ENCODE measurements at regions of chr3 and their contacts with region 1.

Region 1: GRCh38 chr3:109125902-109126301 is 8.0 kb upstream of the MORC1 start:
- DNase-seq: peak; percentile 36 to 60
- H3K4me3 ChIP-seq: no peak overlapping the region
- H3K4me3 Mint-ChIP-seq: peak overlapping the region; percentile 31
- H3K27ac Mint-ChIP-seq: peak overlapping the region; percentile 70
- H3K4me1 ChIP-seq: peaks cover 33% of the 10 kb centered on the region
- H3K4me1 Mint-ChIP-seq: peaks cover 28% of the 10 kb centered on the region
- H3K27me3 ChIP-seq: no peaks in the 10 kb centered on the region
- H3K27me3 Mint-ChIP-seq: no peaks in the 10 kb centered on the region
- CTCF ChIP-seq: no peak

Region 2: DNA sequence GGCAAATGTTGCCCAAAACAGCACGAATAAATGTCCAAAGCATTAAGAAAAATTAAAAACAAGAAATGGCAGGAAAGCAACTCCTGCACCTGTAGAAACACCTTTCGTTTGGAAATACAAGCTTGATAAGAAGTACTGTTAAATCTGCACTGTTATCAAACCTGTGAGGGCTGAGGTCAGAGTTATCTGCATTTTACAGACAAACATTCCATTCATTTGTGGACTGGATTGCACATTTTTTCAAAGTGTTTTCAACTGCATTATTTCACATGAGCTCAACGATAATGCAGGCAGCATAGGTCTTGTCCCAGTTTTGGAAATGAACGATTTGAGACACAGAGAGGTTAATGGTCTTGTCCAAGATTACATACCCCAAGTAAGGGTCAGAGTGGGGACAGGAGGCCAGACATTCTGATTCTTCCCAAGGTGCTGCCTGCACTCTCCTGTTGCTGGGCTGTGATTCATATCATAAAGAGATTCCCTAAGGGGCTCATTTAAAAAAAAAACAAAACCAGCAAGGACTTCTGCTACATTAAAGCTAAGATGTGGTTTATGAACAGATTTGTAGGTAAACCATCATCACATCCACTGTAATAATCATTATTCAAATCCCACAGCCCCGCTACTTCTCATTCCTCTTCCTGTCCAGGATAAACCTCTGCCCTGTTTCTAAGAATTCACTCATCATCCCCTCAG is 185.2 kb before region 1 on chr3:
- CTCF ChIA-PET with region 1: no interaction called
- POLR2A ChIA-PET with region 1: no interaction called
- intact Hi-C with region 1: loop called (anchors 2 kb)
- DNase-seq: peak; percentile 35 to 42
- H3K4me3 ChIP-seq: no peak overlapping the region; the same call in 1 of the 2 replicates
- H3K4me3 Mint-ChIP-seq: peak overlapping the region; percentile 53
- H3K27ac Mint-ChIP-seq: peak overlapping the region; percentile 72
- H3K4me1 ChIP-seq: peaks cover 41% of the 10 kb centered on the region
- H3K4me1 Mint-ChIP-seq: peaks cover 32% of the 10 kb centered on the region
- H3K27me3 ChIP-seq: no peaks in the 10 kb centered on the region
- H3K27me3 Mint-ChIP-seq: no peaks in the 10 kb centered on the region
- CTCF ChIP-seq: no peak

Region 3: GRCh38 chr3:109023656-109024254 is 102.1 kb before region 1 on chr3:
- CTCF ChIA-PET with region 1: no interaction called
- POLR2A ChIA-PET with region 1: no interaction called
- intact Hi-C with region 1: no loop called
- DNase-seq: peak; percentile 36 to 47
- H3K4me3 ChIP-seq: no peak overlapping the region
- H3K4me3 Mint-ChIP-seq: no peak overlapping the region
- H3K27ac Mint-ChIP-seq: no peak overlapping the region
- H3K4me1 ChIP-seq: no peaks in the 10 kb centered on the region
- H3K4me1 Mint-ChIP-seq: no peaks in the 10 kb centered on the region
- H3K27me3 ChIP-seq: no peaks in the 10 kb centered on the region
- H3K27me3 Mint-ChIP-seq: no peaks in the 10 kb centered on the region
- CTCF ChIP-seq: peak; percentile 70 to 73

Region 4: DNA sequence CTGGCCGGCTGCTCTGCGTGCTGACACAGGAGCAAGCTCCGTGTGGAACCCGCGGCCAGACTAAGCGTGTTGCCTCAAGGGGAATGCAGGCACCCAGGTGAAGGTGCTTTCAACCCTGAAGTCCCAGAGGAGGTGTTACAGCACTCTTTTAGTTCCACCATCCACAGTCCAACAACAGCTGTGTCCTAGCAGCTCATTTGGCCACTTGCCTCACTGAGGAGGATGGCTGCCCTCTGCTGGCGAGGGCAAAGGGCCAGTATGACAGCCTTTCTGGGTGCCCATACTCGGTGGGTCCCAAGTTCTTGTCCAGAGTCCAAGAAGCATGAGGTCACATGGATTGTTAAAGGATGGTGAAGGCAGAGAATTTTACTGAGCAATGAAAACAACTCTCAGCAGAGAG is 98.4 kb after region 1 on chr3:
- CTCF ChIA-PET with region 1: no interaction called
- POLR2A ChIA-PET with region 1: no interaction called
- intact Hi-C with region 1: loop called (anchors 1 kb)
- DNase-seq: peak; percentile 54 to 56
- H3K4me3 ChIP-seq: no peak overlapping the region
- H3K4me3 Mint-ChIP-seq: no peak overlapping the region
- H3K27ac Mint-ChIP-seq: no peak overlapping the region
- H3K4me1 ChIP-seq: no peaks in the 10 kb centered on the region
- H3K4me1 Mint-ChIP-seq: no peaks in the 10 kb centered on the region
- H3K27me3 ChIP-seq: no peaks in the 10 kb centered on the region
- H3K27me3 Mint-ChIP-seq: no peaks in the 10 kb centered on the region
- CTCF ChIP-seq: peak; percentile 38 to 55